A549 (cell line): ENCODE measurements at regions of chr11 and their contacts with region 1.

Region 1: GRCh38 chr11:16921019-16921418 is 93.2 kb downstream of the PLEKHA7 start:
- DNase-seq: no peak
- ATAC-seq: no peak
- H3K4me3 ChIP-seq: no peak overlapping the region
- H3K27ac ChIP-seq: no peak overlapping the region
- H3K4me1 ChIP-seq: peaks cover 16% of the 10 kb centered on the region
- CTCF ChIP-seq: no peak
- EP300 ChIP-seq: no peak
- POLR2A ChIP-seq: no peak
- RAD21 ChIP-seq: no peak

Region 2: DNA sequence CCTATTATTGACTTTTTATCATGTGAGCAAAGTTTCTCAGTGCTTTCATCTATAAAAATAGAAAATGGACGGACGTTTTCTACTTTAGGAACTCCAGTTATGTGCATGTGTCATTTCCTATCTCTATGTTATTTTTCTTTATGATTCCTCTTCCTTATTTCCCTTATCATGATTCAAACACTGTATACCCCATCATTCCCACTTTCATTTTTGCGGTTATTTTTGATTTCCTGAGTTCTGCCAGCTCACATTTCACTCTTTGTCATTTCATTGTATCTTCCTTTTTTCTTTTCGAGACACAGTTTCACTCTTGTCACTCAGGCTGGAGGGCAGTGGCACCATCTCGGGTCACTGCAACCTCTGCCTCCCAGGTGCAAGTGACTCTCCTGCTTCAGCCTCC is 161.2 kb before region 1 on chr11:
- CTCF ChIA-PET with region 1: no interaction called
- POLR2A ChIA-PET with region 1: no interaction called
- DNase-seq: no peak
- ATAC-seq: no peak
- H3K4me3 ChIP-seq: no peak overlapping the region
- H3K27ac ChIP-seq: no peak overlapping the region
- H3K4me1 ChIP-seq: no peaks in the 10 kb centered on the region
- CTCF ChIP-seq: no peak
- EP300 ChIP-seq: no peak
- POLR2A ChIP-seq: no peak
- RAD21 ChIP-seq: no peak

Region 3: GRCh38 chr11:16891964-16892363 is 29.1 kb before region 1 on chr11:
- CTCF ChIA-PET with region 1: no interaction called
- POLR2A ChIA-PET with region 1: no interaction called
- DNase-seq: no peak
- ATAC-seq: no peak; a peak in 1 of 6 replicates
- H3K4me3 ChIP-seq: no peak overlapping the region
- H3K27ac ChIP-seq: no peak overlapping the region
- H3K4me1 ChIP-seq: no peaks in the 10 kb centered on the region
- CTCF ChIP-seq: no peak
- EP300 ChIP-seq: no peak
- POLR2A ChIP-seq: no peak
- RAD21 ChIP-seq: no peak

Region 4: GRCh38 chr11:16909359-16910035 is 11.5 kb before region 1 on chr11:
- CTCF ChIA-PET with region 1: interaction called, 14 read pairs
- POLR2A ChIA-PET with region 1: no interaction called
- DNase-seq: no peak
- ATAC-seq: peak in 1 of 2 experiments; percentile 33; a peak in 2 of 6 replicates
- H3K4me3 ChIP-seq: no peak overlapping the region
- H3K27ac ChIP-seq: no peak overlapping the region
- H3K4me1 ChIP-seq: peaks cover 8% of the 10 kb centered on the region; the same call in 2 of the 3 replicates
- CTCF ChIP-seq: no peak
- EP300 ChIP-seq: no peak
- POLR2A ChIP-seq: no peak
- RAD21 ChIP-seq: no peak